ENCODE measurements at regions of chr12 and their contacts with region 1.

Region 1: GRCh38 chr12:95336390-95337067 is 118.9 kb downstream of the VEZT start:
- DNase-seq: peak; percentile 66
- H3K4me3 ChIP-seq: no peak overlapping the region
- H3K27ac ChIP-seq: peak overlapping the region; percentile 48 to 76 (median 58)
- H3K4me1 ChIP-seq: peaks cover 0 to 9% (median 0%) of the 10 kb centered on the region in 4 donors
- H3K27me3 ChIP-seq: no peaks in the 10 kb centered on the region
- CTCF ChIP-seq: peak; percentile 55 to 70 (median 65)
- EP300 ChIP-seq: no peak
- POLR2A ChIP-seq: no peak

Region 2: DNA sequence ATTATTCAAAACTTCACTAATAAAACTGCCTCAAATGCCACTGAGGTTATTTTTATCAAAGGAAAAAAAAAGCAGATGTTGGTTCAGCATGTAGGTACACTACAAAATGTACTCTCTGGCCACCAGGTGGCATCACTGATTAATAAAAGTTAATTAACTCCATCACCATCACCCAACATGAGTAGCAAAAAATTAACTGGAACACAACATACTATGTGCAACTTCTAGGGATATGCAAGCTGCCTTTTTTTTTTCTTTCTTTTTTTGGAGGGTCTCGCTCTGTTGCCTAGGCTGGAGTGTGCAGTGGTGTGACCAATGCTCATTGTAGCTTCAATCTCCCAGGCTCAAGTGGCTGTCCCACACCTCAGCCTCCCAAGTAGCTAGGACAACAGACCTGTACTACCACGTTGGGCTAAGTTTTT is 219.3 kb before region 1 on chr12:
- in situ Hi-C with region 1: loop called (anchors 5 to 25 kb)
- intact Hi-C with region 1: loop called (anchors 5 kb)
- DNase-seq: peak; percentile 66
- H3K4me3 ChIP-seq: no peak overlapping the region
- H3K27ac ChIP-seq: peak overlapping the region; percentile 30 to 60 (median 52)
- H3K4me1 ChIP-seq: peaks cover 0 to 25% (median 13%) of the 10 kb centered on the region in 4 donors
- H3K27me3 ChIP-seq: no peaks in the 10 kb centered on the region
- CTCF ChIP-seq: peak; percentile 66 to 87 (median 78)
- EP300 ChIP-seq: no peak
- POLR2A ChIP-seq: no peak

Region 3: GRCh38 chr12:95124106-95124505 is 212.4 kb before region 1 on chr12:
- in situ Hi-C with region 1: loop called (anchors 5 to 25 kb)
- intact Hi-C with region 1: loop called (anchors 5 kb)
- DNase-seq: peak; percentile 28
- H3K4me3 ChIP-seq: no peak overlapping the region
- H3K27ac ChIP-seq: peak overlapping the region; percentile 24 to 73 (median 51)
- H3K4me1 ChIP-seq: peaks cover 0 to 13% (median 8%) of the 10 kb centered on the region in 4 donors
- H3K27me3 ChIP-seq: no peaks in the 10 kb centered on the region
- CTCF ChIP-seq: no peak
- EP300 ChIP-seq: no peak
- POLR2A ChIP-seq: no peak

Region 4: GRCh38 chr12:95224202-95225170 is 112.0 kb before region 1 on chr12:
- in situ Hi-C with region 1: no loop called
- intact Hi-C with region 1: loop called (anchors 10 kb)
- DNase-seq: no peak
- H3K4me3 ChIP-seq: no peak overlapping the region
- H3K27ac ChIP-seq: no peak overlapping the region
- H3K4me1 ChIP-seq: peaks cover 7 to 46% (median 15%) of the 10 kb centered on the region in 4 donors
- H3K27me3 ChIP-seq: no peaks in the 10 kb centered on the region
- CTCF ChIP-seq: no peak
- EP300 ChIP-seq: no peak
- POLR2A ChIP-seq: no peak

Region 5: GRCh38 chr12:95303476-95303875 is 33.1 kb before region 1 on chr12:
- in situ Hi-C with region 1: no loop called
- intact Hi-C with region 1: no loop called
- DNase-seq: no peak
- H3K4me3 ChIP-seq: no peak overlapping the region
- H3K27ac ChIP-seq: no peak overlapping the region
- H3K4me1 ChIP-seq: no peaks in the 10 kb centered on the region
- H3K27me3 ChIP-seq: no peaks in the 10 kb centered on the region
- CTCF ChIP-seq: no peak
- EP300 ChIP-seq: no peak
- POLR2A ChIP-seq: no peak

Measured in transverse colon (tissue), 4 donors.